ENCODE measurements at regions of chrX and their contacts with region 1.

Region 1: DNA sequence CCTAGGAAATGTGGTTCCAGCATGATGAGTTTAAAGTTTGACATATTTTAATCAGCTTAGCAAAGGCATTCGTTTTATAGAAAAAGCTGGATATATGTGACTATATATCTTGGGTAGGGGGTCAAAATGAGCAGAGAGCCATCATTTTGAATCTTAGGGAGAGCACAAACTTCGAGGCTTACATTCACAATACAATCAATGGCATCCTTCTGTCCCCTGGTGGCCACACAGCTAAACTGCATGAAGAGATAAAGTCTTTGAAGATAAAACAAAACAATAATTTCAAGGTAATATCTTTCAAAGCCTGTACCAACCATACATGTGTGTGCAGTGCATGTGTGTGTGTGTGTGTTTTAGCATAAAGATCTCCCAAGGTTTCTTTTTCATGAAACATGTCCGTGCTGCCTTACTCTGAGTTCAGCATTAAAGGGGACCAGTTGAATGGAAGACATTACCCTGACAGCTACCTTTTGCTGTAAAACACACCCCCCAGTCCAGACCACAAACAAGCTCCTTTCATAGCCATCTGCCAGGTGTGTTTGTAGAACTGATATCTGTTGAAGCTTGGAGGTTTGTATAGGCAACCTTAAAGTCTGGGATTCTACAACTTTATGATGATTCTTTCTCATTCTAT is 22.0 kb downstream of the DYNLT3 start:
- DNase-seq: no peak
- ATAC-seq: peak; percentile 79
- H3K4me3 Mint-ChIP-seq: no peak overlapping the region
- H3K27ac Mint-ChIP-seq: peak overlapping the region; percentile 81
- H3K4me1 Mint-ChIP-seq: peaks cover 48% of the 10 kb centered on the region
- H3K27me3 Mint-ChIP-seq: no peaks in the 10 kb centered on the region
- CTCF ChIP-seq: no peak

Region 2: GRCh38 chrX:37509349-37509748 is 316.0 kb before region 1 on chrX:
- CTCF ChIA-PET with region 1: interaction called, 8 read pairs
- POLR2A ChIA-PET with region 1: no interaction called
- intact Hi-C with region 1: loop called (anchors 2 kb)
- DNase-seq: no peak
- ATAC-seq: no peak
- H3K4me3 Mint-ChIP-seq: no peak overlapping the region
- H3K27ac Mint-ChIP-seq: no peak overlapping the region
- H3K4me1 Mint-ChIP-seq: no peaks in the 10 kb centered on the region
- H3K27me3 Mint-ChIP-seq: no peaks in the 10 kb centered on the region
- CTCF ChIP-seq: no peak

Region 3: DNA sequence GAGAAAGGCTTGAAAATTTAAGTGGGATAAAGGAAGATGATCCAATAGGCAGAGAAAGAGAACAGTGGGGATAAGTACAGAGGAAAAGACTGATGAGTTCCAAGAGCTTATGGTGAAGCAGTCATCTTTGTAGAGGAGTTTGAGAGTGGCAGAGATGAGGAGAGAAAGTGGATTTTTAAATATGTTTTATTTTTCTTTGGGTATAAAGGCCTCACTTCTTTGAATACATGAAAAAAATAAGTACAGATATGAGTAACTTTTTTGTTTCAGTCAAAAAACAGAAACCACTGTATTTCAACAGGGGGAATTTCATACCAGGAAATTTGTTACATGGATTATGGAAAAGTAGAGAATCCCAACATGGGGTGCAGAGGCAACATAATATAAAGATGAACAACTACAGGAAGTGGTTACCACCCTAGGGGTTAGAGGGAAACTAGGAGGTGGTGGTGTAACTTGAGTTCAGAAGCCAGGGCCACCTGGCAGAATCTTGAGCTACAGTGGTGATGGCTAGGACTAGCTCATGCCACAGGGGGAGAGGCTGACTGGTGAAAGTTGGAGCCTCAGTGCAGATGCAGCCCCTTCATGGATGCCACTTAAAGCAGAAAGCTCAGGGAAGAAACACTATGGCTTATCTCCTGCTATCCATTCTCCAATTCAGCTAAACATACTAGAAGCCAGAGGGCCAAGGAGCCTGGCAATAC is 48.9 kb before region 1 on chrX:
- CTCF ChIA-PET with region 1: interaction called, 29 read pairs
- POLR2A ChIA-PET with region 1: interaction called, 16 read pairs
- intact Hi-C with region 1: no loop called
- DNase-seq: no peak
- ATAC-seq: peak; percentile 73
- H3K4me3 Mint-ChIP-seq: peak overlapping the region; percentile 50
- H3K27ac Mint-ChIP-seq: peak overlapping the region; percentile 87
- H3K4me1 Mint-ChIP-seq: peaks cover 33% of the 10 kb centered on the region
- H3K27me3 Mint-ChIP-seq: no peaks in the 10 kb centered on the region
- CTCF ChIP-seq: no peak

Region 4: DNA sequence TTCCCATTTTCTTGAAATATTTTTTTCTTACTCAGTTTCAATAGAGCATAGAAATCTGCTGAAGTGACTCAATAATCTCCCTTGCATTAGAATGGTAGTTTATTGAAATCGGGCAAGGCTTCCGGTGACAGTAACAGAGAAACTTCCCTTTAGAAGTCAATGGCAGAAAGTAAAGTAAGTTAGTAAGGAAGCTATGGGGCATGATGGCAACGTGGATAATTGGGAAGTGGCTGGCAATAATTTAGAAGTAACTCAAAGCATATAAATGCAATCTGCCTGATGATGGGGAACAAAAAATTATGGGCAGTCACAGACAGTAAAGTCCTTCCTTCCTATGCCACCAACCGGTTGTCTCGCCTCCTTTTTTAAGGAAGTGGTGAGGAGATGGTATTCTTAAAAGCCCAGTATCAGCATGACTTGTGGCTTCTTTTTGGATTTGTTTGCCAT is 37.9 kb before region 1 on chrX:
- CTCF ChIA-PET with region 1: interaction called, 34 read pairs
- POLR2A ChIA-PET with region 1: interaction called, 16 read pairs
- intact Hi-C with region 1: no loop called
- DNase-seq: no peak
- ATAC-seq: peak; percentile 71
- H3K4me3 Mint-ChIP-seq: peak overlapping the region; percentile 77
- H3K27ac Mint-ChIP-seq: peak overlapping the region; percentile 97
- H3K4me1 Mint-ChIP-seq: peaks cover 79% of the 10 kb centered on the region
- H3K27me3 Mint-ChIP-seq: no peaks in the 10 kb centered on the region
- CTCF ChIP-seq: no peak

Region 5: DNA sequence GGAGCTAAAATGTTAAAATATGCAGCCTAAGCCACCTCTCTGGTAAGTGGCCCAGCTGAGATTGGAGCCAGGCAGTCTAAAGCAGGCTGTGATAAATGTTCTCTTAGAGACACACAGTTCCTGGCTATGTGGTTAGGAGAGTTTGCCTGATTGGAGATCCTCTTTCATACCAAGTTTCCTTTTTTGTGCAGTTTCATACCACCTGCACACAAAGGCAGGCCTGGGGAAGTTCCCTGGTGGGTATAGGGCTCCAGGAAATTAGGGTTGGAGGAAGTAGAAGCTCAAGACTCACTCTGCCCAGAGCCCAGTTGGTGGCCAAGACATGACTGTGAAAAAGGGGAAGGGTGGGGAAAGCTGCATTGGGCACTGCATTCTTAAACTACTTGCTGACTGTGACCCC is 28.5 kb before region 1 on chrX:
- CTCF ChIA-PET with region 1: interaction called, 34 read pairs
- POLR2A ChIA-PET with region 1: interaction called, 6 read pairs
- intact Hi-C with region 1: loop called (anchors 2 kb)
- DNase-seq: no peak
- ATAC-seq: peak; percentile 90
- H3K4me3 Mint-ChIP-seq: peak overlapping the region; percentile 28
- H3K27ac Mint-ChIP-seq: peak overlapping the region; percentile 79
- H3K4me1 Mint-ChIP-seq: peaks cover 79% of the 10 kb centered on the region
- H3K27me3 Mint-ChIP-seq: no peaks in the 10 kb centered on the region
- CTCF ChIP-seq: no peak

Region 6: GRCh38 chrX:37846934-37847732 is 21.8 kb after region 1 on chrX and contains the start of gene DYNLT3:
- CTCF ChIA-PET with region 1: no interaction called
- POLR2A ChIA-PET with region 1: interaction called, 3 read pairs
- intact Hi-C with region 1: loop called (anchors 2 kb)
- DNase-seq: peak; percentile 72
- ATAC-seq: peak; percentile 99
- H3K4me3 Mint-ChIP-seq: peak within 1 kb of the TSS; percentile 81
- H3K27ac Mint-ChIP-seq: peak within 1 kb of the TSS; percentile 86
- H3K4me1 Mint-ChIP-seq: peaks cover 20% of the 10 kb centered on the region
- H3K27me3 Mint-ChIP-seq: no peaks in the 10 kb centered on the region
- CTCF ChIP-seq: no peak
- total RNA-seq, gene DYNLT3: 17.7 and 19.1 TPM in 2 replicates

Region 7: GRCh38 chrX:38166478-38167083 is 341.3 kb after region 1 on chrX:
- CTCF ChIA-PET with region 1: interaction called, 3 read pairs
- POLR2A ChIA-PET with region 1: no interaction called
- intact Hi-C with region 1: loop called (anchors 2 kb)
- DNase-seq: no peak
- ATAC-seq: no peak
- H3K4me3 Mint-ChIP-seq: no peak overlapping the region
- H3K27ac Mint-ChIP-seq: no peak overlapping the region
- H3K4me1 Mint-ChIP-seq: no peaks in the 10 kb centered on the region
- H3K27me3 Mint-ChIP-seq: no peaks in the 10 kb centered on the region
- CTCF ChIP-seq: peak; percentile 35

Measured in activated B cell treated with CpG ODN at 0.5 μM for 24 hours (primary cell).